A673 (cell line): ENCODE measurements at regions of chr10 and their contacts with region 1.

Region 1: DNA sequence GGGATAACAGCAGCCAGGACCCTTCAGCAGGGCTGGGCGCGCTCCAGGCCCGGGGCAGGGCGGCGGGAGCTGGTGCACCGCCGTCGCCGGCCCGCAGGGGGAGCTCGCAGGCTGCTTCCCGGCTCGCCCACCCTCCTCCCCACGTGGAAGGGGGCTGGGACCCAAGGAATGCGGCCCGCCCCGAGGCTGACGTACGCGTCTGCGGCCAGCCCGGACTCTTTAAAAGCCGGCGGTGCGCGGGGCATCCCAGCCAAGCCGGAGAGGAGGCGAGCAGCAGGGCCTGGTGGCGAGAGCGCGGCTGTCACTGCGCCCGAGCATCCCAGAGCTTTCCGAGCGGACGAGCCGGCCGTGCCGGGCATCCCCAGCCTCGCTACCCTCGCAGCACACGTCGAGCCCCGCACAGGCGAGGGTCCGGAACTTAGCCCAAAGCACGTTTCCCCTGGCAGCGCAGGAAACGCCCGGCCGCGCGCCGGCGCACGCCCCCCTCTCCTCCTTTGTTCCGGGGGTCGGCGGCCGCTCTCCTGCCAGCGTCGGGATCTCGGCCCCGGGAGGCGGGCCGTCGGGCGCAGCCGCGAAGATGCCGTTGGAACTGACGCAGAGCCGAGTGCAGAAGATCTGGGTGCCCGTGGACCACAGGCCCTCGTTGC is at the start of gene PFKFB3:
- DNase-seq: peak; percentile 97
- H3K4me3 ChIP-seq: peak within 1 kb of the TSS; percentile 71
- H3K27ac ChIP-seq: peak within 1 kb of the TSS; percentile 75
- H3K4me1 ChIP-seq: peaks cover 25% of the 10 kb centered on the region
- H3K27me3 ChIP-seq: no peaks in the 10 kb centered on the region
- CTCF ChIP-seq: peak; percentile 83
- total RNA-seq, gene PFKFB3: 42.8 and 53.0 TPM in 2 replicates

Region 2: DNA sequence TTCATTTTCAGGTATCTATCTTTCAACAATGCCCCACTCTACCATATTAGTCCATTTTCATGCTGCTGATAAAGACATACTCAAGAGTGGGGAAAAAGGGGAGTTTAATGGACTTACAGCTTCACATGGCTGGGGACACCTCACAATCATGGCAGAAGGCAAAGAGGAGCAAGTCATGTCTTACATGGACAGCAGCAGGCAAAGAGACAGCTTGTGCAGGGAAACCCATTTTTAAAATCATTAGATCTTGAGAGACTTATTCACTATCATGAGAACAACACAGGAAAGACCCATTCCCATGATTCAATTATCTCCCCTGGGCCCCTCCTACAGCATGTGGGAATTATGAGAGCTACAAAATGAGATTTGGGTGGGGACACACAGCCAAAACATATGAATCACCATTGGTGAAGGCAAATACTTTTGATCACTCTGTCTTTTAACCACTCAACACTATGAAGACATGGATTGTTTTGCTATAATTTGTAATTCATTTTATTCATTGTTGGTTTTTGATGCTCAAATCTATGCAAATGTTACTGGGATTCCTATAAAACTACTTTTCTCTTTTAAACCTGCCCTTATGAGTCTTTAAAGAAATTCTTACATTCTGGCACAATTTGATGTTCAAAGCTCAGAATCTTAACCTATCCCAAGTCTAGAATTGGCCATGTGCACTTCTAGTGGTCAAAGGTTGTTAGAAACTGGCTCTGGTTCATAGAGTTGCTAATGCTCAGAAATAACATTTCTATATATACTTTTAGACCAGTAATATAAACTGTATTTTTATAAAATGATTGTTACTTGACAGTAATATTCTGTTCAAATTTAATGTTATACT is 990.9 kb before region 1 on chr10:
- CTCF ChIA-PET with region 1: no interaction called
- POLR2A ChIA-PET with region 1: no interaction called
- intact Hi-C with region 1: no loop called
- DNase-seq: no peak
- H3K4me3 ChIP-seq: no peak overlapping the region
- H3K27ac ChIP-seq: no peak overlapping the region
- H3K4me1 ChIP-seq: no peaks in the 10 kb centered on the region
- H3K27me3 ChIP-seq: no peaks in the 10 kb centered on the region
- CTCF ChIP-seq: no peak

Region 3: DNA sequence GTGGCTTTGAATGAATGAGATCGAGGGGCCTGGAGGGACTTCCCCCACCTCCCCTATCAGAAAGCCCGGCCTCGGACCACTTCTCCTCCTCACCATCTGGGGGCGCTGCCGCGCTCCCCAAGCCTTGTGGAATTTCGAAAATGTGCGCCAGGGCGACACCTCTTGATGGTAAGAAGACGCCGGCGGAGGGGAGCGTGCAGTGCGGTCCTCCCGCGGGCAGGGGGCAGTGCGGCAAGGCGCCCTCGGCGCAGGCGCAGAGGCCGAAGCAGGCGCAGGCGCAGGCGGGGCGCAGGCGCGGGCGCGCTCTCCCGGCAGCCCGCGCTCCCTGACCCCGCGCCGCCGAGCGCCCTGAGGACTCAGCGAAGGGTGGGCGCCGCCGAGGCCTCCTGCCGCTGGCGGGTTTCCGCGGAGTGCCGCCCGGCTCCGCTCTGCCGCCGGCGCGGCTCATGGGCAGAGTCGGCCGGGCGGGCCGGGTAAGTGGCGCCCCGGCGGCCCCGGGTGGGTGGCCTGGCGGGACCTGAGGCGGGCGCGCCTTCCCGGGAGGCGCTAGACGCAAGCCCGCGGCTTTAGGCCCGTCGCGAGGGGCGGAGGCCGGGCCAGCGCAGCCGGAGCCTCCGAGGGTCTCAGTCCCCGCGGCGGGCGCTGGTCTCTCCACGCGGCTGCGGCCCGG is 114.0 kb before region 1 on chr10 and contains the start of gene RBM17:
- CTCF ChIA-PET with region 1: interaction called, 6 read pairs
- POLR2A ChIA-PET with region 1: no interaction called
- intact Hi-C with region 1: loop called (anchors 5 kb)
- DNase-seq: peak; percentile 98
- H3K4me3 ChIP-seq: peak within 1 kb of the TSS; percentile 87
- H3K27ac ChIP-seq: peak within 1 kb of the TSS; percentile 95
- H3K4me1 ChIP-seq: peaks cover 25% of the 10 kb centered on the region
- H3K27me3 ChIP-seq: no peaks in the 10 kb centered on the region
- CTCF ChIP-seq: peak; percentile 100
- total RNA-seq, gene RBM17: 195 and 200 TPM in 2 replicates

Region 4: GRCh38 chr10:6108603-6109443 is 94.0 kb before region 1 on chr10:
- CTCF ChIA-PET with region 1: no interaction called
- POLR2A ChIA-PET with region 1: no interaction called
- intact Hi-C with region 1: loop called (anchors 2 kb)
- DNase-seq: peak; percentile 68
- H3K4me3 ChIP-seq: no peak overlapping the region
- H3K27ac ChIP-seq: no peak overlapping the region
- H3K4me1 ChIP-seq: no peaks in the 10 kb centered on the region
- H3K27me3 ChIP-seq: no peaks in the 10 kb centered on the region
- CTCF ChIP-seq: peak; percentile 71

Region 5: DNA sequence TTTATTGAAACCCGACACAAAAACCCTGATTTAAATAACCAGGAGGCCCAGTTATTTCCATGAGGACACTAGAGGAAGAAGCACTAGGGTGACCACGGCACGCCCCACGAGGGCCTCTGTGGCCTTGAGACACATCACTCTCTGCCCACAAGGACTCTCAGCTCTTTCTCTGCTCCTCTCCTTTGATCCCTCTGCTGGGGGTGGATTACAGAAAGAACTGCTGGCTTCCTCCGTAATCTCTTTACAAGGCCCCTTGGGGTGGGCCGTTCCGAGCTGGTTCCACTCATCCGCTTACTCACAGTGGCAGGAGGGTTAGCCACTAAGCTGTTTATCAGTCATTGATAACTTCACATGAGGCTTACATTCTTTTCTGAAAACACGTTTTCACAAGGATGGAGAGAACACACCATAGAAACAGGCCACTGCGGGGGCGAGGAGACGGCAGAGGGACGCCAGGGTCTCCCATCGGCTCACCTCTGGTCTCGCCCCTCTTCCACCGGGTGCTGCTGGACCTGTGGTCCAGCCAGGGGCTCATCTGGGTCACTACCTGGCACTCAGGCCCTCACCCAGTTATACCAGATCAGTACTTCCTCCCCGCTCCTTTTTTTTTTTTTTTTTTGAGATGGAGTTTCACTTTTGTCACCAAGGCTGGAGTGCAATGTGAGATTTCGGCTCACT is 17.6 kb before region 1 on chr10:
- CTCF ChIA-PET with region 1: no interaction called
- POLR2A ChIA-PET with region 1: interaction called, 26 read pairs
- intact Hi-C with region 1: no loop called
- DNase-seq: no peak
- H3K4me3 ChIP-seq: no peak overlapping the region
- H3K27ac ChIP-seq: no peak overlapping the region
- H3K4me1 ChIP-seq: no peaks in the 10 kb centered on the region
- H3K27me3 ChIP-seq: no peaks in the 10 kb centered on the region
- CTCF ChIP-seq: no peak

Region 6: DNA sequence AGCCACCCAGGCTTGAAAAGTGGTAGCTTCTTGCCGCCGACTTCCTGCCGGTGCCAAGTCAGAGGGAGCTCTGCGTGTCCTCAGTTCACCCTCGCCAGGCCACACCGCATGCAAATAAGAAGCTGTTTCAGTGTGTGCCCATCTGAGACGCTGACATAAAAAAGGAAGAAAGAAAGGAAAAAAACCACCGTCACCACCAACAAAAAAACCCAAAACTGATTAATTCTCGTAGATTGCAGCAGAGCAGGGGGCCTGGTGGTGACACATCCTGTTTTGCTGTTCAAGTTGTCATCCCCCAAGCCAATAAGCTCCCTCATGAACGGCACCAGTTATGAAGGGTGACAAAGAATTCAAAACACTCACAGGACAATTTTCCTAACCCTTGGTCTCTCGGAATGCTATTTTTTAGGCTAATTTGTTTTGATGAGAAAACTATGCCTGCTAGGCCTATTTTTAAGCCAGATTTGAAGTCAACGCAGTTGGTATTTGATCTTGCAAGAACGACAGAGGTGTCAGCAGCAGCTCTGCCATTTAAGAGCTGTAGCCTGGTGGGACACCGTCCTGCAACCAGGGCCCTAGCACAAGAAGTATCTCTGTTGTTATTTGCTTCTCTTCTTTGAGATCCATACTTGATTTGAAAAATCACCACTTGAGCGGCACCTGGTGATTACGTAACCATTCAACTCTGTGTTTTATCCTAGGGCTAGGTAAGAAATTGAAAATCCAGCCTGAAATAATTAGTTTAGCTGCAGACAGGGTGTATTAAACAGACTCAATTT is 145.5 kb after region 1 on chr10:
- CTCF ChIA-PET with region 1: interaction called, 4 read pairs
- POLR2A ChIA-PET with region 1: no interaction called
- intact Hi-C with region 1: loop called (anchors 10 kb)
- DNase-seq: peak; percentile 71
- H3K4me3 ChIP-seq: no peak overlapping the region
- H3K27ac ChIP-seq: peak overlapping the region; percentile 69
- H3K4me1 ChIP-seq: peaks cover 15% of the 10 kb centered on the region
- H3K27me3 ChIP-seq: no peaks in the 10 kb centered on the region
- CTCF ChIP-seq: no peak

Region 7: DNA sequence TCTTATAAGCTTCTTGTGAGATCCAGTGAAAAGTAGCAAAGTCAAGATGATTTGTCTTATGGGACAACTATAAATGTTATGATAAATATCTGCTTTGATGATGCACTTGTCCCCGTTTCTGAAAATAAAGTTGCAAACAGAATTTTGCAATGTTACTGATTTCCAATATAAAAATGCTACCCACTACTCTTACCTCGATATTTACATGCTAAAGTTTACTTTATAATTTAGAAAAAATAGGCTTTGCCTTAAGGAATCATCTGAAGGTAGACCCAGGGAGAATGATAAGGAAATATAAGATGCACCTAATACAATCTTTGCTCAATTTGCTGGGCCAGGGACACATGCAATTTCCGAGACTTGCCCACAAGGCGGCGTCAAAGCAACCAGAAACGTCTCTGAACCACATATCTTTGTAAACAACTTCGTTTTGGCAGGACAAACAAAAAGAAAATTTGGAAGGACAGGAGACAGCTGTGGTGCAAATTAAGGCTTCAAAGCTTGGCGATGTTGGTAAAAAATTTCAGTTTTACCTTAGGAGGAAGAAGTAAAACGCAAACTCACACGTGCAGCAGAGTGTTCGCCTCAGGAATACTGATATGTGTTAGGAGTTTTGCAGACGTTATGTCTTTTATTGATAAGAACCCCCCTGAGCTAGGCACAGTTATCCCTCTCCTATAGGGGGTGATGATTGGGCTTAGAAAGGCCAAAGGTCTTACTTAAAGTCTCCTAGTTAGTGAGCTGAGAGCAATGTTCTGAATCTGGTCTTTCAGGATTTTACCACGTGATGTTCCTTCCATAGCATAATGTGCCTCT is 242.9 kb after region 1 on chr10:
- CTCF ChIA-PET with region 1: interaction called, 10 read pairs
- POLR2A ChIA-PET with region 1: no interaction called
- intact Hi-C with region 1: no loop called
- DNase-seq: peak; percentile 44
- H3K4me3 ChIP-seq: no peak overlapping the region
- H3K27ac ChIP-seq: no peak overlapping the region
- H3K4me1 ChIP-seq: no peaks in the 10 kb centered on the region
- H3K27me3 ChIP-seq: peaks cover 47% of the 10 kb centered on the region
- CTCF ChIP-seq: peak; percentile 80